Activated B cell treated with CpG ODN at 0.5 μM for 24 hours (primary cell): ENCODE measurements at regions of chr3 and their contacts with region 1.

Region 1: GRCh38 chr3:105322570-105323273 is 44.0 kb upstream of the ALCAM start:
- DNase-seq: no peak
- ATAC-seq: peak; percentile 85
- H3K4me3 Mint-ChIP-seq: no peak overlapping the region
- H3K27ac Mint-ChIP-seq: peak overlapping the region; percentile 50
- H3K4me1 Mint-ChIP-seq: peaks cover 6% of the 10 kb centered on the region
- H3K27me3 Mint-ChIP-seq: no peaks in the 10 kb centered on the region
- CTCF ChIP-seq: no peak

Region 2: GRCh38 chr3:105284876-105285275 is 37.8 kb before region 1 on chr3:
- CTCF ChIA-PET with region 1: no interaction called
- POLR2A ChIA-PET with region 1: no interaction called
- intact Hi-C with region 1: no loop called
- DNase-seq: no peak
- ATAC-seq: no peak
- H3K4me3 Mint-ChIP-seq: no peak overlapping the region
- H3K27ac Mint-ChIP-seq: no peak overlapping the region
- H3K4me1 Mint-ChIP-seq: no peaks in the 10 kb centered on the region
- H3K27me3 Mint-ChIP-seq: no peaks in the 10 kb centered on the region
- CTCF ChIP-seq: no peak

Region 3: DNA sequence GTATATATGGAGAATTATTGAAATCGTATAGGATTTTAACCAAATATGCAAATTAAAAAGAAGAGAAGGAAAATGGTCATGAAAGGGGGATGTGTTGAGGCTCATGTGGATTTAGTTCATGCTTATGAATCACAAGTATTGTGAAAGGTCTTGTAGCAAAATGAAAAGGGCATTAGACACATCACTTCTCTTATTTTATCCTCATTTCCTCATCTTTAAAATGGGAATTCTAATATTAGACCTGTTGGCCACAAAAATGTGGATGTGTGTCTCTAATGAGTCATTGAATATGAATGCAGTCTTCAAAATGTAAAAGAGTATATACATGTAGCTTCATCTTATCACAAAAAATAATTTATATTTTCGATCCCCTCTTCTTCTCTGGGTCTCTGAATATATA is 29.1 kb after region 1 on chr3:
- CTCF ChIA-PET with region 1: no interaction called
- POLR2A ChIA-PET with region 1: no interaction called
- intact Hi-C with region 1: loop called (anchors 2 kb)
- DNase-seq: no peak
- ATAC-seq: no peak
- H3K4me3 Mint-ChIP-seq: no peak overlapping the region
- H3K27ac Mint-ChIP-seq: no peak overlapping the region
- H3K4me1 Mint-ChIP-seq: peaks cover 34% of the 10 kb centered on the region
- H3K27me3 Mint-ChIP-seq: peaks cover 22% of the 10 kb centered on the region
- CTCF ChIP-seq: no peak